AG04450 (cell line): ENCODE measurements at regions of chr7 and their contacts with region 1.

Region 1: DNA sequence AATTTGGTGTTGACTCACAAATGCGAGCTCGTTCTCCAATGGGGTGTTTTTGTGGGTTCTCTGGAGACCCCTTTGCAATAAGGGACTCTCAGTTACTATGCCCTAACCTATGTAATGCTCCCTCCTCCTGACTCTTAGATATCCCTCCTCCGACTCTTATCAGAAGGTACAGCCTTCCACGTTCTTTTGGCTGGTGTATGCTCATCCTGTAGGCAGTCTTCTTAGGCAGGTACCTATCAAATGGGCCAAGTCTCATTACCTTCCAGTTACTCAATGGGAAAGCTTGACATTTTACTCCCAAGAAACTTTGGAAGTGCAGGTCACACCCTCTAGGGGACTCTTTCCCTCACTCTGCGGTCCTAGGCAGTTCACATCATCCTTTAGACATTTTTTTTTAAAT is 32.6 kb downstream of the SLC26A5 start:
- DNase-seq: no peak
- H3K4me3 ChIP-seq: no peak overlapping the region
- H3K27ac ChIP-seq: no peak overlapping the region
- H3K27me3 ChIP-seq: peaks cover 6% of the 10 kb centered on the region
- CTCF ChIP-seq: no peak

Region 2: GRCh38 chr7:103317016-103317415 is 96.4 kb before region 1 on chr7:
- CTCF ChIA-PET with region 1: no interaction called
- POLR2A ChIA-PET with region 1: no interaction called
- DNase-seq: no peak
- H3K4me3 ChIP-seq: no peak overlapping the region
- H3K27ac ChIP-seq: no peak overlapping the region
- H3K27me3 ChIP-seq: no peaks in the 10 kb centered on the region
- CTCF ChIP-seq: no peak

Region 3: GRCh38 chr7:103499907-103500306 is 86.5 kb after region 1 on chr7:
- CTCF ChIA-PET with region 1: no interaction called
- POLR2A ChIA-PET with region 1: interaction called, 13 read pairs
- DNase-seq: no peak
- H3K4me3 ChIP-seq: no peak overlapping the region
- H3K27ac ChIP-seq: no peak overlapping the region
- H3K27me3 ChIP-seq: no peaks in the 10 kb centered on the region
- CTCF ChIP-seq: no peak